ENCODE measurements at regions of chr4 and their contacts with region 1.

Region 1: GRCh38 chr4:155442267-155443105 is 65.7 kb upstream of the MAP9 start:
- DNase-seq: peak; percentile 79
- H3K4me3 ChIP-seq: peak overlapping the region in 1 of 4 donors; percentile 19
- H3K27ac ChIP-seq: peak overlapping the region in 2 of 4 donors; percentile 19 to 21
- H3K4me1 ChIP-seq: peaks cover 0 to 10% (median 0%) of the 10 kb centered on the region in 4 donors
- H3K27me3 ChIP-seq: no peaks in the 10 kb centered on the region
- CTCF ChIP-seq: peak; percentile 79 to 95 (median 93)
- EP300 ChIP-seq: no peak
- POLR2A ChIP-seq: no peak

Region 2: GRCh38 chr4:155667568-155668511 is 225.4 kb after region 1 on chr4:
- in situ Hi-C with region 1: no loop called
- intact Hi-C with region 1: loop called (anchors 10 kb)
- DNase-seq: peak; percentile 35
- H3K4me3 ChIP-seq: peak overlapping the region; percentile 46 to 66 (median 52)
- H3K27ac ChIP-seq: peak overlapping the region; percentile 83 to 94 (median 86)
- H3K4me1 ChIP-seq: peaks cover 0 to 5% (median 3%) of the 10 kb centered on the region in 4 donors
- H3K27me3 ChIP-seq: peaks cover 34% of the 10 kb centered on the region
- CTCF ChIP-seq: no peak
- EP300 ChIP-seq: no peak
- POLR2A ChIP-seq: no peak

Region 3: GRCh38 chr4:155787113-155787710 is 344.7 kb after region 1 on chr4:
- in situ Hi-C with region 1: loop called (anchors 10 to 25 kb)
- intact Hi-C with region 1: loop called (anchors 10 kb)
- DNase-seq: no peak
- H3K4me3 ChIP-seq: no peak overlapping the region
- H3K27ac ChIP-seq: no peak overlapping the region
- H3K4me1 ChIP-seq: peaks cover 0 to 6% (median 0%) of the 10 kb centered on the region in 4 donors
- H3K27me3 ChIP-seq: no peaks in the 10 kb centered on the region
- CTCF ChIP-seq: peak; percentile 45 to 76 (median 64)
- EP300 ChIP-seq: no peak
- POLR2A ChIP-seq: no peak

Region 4: DNA sequence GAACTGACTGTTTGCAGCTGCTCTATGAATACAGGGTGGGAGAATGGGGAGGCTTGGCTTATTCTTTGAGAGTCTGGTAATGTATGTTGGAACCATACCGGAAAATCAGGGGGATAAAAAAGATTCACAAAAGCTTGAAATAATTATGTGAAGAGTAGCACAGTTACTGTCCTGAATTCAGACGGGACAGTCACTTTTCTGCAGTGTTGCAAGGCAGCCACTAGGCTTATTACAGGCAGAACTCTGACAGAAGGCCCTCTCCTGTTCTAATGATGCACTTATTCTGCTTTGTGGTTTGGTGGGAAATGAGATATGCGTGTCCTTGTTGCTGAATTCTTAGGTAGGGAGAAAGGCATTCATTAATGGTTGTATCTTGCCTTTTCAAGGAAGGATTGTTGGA is 353.5 kb after region 1 on chr4:
- in situ Hi-C with region 1: loop called in 3 of 4 experiments (anchors 10 to 25 kb)
- intact Hi-C with region 1: no loop called
- DNase-seq: no peak
- H3K4me3 ChIP-seq: no peak overlapping the region
- H3K27ac ChIP-seq: no peak overlapping the region
- H3K4me1 ChIP-seq: no peaks in the 10 kb centered on the region
- H3K27me3 ChIP-seq: no peaks in the 10 kb centered on the region
- CTCF ChIP-seq: peak in 2 of 5 experiments; percentile 17 to 30
- EP300 ChIP-seq: no peak
- POLR2A ChIP-seq: no peak

Region 5: DNA sequence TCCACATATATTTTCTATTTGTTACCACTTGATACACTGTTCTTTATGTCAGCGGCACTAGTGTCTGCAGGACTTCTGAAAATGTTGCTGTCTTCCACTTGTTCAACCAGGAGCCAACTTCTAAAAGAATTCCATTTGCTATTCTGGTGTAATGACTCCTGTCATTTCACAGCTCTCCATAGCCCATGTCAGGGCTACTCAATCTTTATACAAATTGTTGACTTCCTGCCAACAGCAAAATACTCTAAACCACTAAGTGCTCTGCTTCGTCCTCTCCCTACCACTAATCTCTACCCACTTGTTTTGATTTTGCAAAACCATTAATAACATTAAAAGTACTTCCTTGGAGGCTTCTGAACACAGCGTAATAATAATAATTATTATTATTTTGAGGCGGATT is 504.0 kb after region 1 on chr4:
- in situ Hi-C with region 1: loop called in 1 of 4 experiments (anchors 25 kb)
- intact Hi-C with region 1: no loop called
- DNase-seq: no peak
- H3K4me3 ChIP-seq: no peak overlapping the region
- H3K27ac ChIP-seq: no peak overlapping the region
- H3K4me1 ChIP-seq: no peaks in the 10 kb centered on the region
- H3K27me3 ChIP-seq: no peaks in the 10 kb centered on the region
- CTCF ChIP-seq: no peak
- EP300 ChIP-seq: no peak
- POLR2A ChIP-seq: no peak